Adrenal gland (tissue), 19 donors: ENCODE measurements at regions of chr2 and their contacts with region 1.

Region 1: DNA sequence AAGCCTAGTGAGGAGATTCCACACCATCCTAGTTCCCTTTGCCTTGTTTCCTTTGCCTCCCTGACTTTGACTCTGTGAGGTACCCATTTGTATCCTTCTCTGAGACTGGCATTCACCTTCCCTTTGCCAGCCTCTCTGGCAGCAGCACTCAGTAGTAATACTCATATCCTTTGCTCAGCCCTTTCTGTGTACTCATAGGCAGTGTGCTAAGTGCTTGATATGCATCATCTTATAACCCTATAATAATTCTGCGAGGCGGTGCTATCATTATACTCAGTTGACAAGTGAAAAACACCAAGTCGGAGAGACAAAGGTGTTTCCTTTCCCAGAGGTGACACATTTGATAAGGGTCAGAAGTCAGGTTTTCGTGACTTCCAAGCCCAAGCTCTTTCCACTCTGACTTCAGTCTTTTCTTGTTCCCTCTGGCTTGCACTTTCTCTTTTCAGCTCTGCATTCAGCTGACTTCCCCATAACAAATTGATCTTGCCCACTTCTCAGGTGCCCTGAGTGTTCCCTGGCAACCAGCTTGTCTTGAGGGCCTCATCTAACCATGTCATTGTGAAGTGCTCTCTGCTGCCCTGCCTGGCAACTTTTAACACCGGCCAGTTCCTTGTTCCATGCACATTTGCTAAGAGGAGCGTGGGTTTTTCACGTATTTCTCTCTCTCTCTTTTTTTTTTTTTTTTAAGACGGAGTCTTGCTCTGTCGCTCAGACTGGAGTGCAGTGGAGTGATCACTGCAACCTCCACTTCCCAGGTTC is 94.5 kb upstream of the UPP2 start:
- DNase-seq: peak in 1 of 7 donors; percentile 70
- H3K4me3 ChIP-seq: no peak overlapping the region
- H3K27ac ChIP-seq: no peak overlapping the region
- H3K4me1 ChIP-seq: peaks cover 5 to 13% of the 10 kb centered on the region in 2 donors
- H3K27me3 ChIP-seq: no peaks in the 10 kb centered on the region
- CTCF ChIP-seq: peak in 1 of 6 experiments; percentile 20
- POLR2A ChIP-seq: no peak

Region 2: DNA sequence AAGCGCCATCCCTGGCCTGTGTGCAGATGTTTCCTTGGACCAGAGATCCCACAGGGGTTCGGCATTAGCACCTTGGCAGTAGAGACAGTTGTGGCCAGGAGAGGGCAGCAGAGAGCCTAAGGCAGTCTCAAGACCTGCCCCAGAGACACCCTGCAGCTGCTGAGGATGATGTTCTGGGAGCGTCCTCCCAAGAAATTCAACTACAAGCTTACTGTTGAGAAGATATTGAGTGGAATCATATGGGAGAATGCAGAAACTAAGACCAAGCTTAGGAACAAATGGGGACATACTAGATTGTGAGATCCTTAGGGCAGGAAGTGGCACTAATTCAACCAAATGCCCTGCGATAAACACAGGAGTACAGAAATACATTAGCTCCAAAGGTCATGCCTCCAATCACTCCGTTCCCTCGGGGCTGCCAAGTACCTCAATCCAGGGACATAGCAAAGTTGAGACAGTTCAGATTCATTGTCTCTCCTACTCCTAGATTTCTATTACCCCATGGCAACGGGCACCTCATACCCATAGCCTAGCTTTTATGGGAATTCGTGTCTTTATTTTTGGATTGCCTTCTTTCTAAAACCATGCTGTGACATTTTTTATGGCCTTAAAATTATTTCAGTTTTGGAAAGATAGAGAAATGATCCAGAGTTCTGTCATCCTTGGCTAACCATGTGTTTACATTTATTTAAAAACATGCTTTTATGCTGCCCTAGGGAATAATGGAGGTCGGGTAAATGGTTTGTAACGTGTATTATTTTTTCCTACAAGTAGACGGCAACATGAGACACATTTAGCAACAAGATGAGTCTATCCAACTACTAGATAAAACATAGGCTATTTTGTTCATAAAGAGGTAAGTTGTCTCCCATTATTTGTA is 679.3 kb before region 1 on chr2:
- intact Hi-C with region 1: loop called in 1 of 2 experiments (anchors 10 kb)
- DNase-seq: peak; percentile 62 to 90 (median 81)
- H3K4me3 ChIP-seq: no peak overlapping the region
- H3K27ac ChIP-seq: no peak overlapping the region
- H3K4me1 ChIP-seq: no peaks in the 10 kb centered on the region
- H3K27me3 ChIP-seq: no peaks in the 10 kb centered on the region
- CTCF ChIP-seq: peak; percentile 54 to 90 (median 71)
- POLR2A ChIP-seq: no peak

Region 3: DNA sequence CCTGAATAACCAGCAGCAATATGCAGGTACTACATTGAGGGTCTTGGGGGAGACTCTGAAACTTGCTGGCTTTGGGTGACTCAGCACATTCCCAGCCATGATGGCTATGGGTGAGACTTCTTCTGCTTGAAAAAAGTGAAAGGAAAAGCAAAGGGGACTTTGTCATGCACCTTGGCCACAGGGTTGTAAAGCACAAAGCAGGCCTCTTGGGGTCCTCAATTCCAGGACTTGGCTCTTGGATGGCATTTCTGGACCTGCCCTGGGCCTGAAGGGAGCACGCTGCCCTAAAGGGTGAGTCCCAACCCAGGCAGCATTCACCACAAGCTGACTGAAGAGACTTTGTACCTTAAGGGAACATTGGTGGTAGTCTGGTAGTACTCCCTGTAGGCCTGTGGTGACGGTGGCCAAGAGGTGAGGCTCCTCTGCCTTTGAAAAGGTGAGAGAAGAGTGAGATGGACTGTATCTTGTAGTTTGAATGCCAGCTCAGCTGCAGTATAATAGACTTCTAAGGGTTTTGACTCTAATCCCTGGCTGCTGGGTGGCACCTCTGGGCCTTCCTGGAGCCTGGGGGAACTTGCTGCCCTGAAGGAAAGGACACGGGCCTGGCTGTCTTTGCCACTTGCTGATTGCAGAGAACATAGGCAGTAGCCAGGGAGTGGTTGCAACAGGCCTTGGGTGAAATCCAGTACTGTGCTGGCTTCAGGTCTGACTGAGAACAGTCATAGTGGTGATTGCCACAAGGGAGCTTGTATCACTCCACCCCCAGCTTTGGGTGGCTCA is 526.8 kb before region 1 on chr2:
- intact Hi-C with region 1: loop called in 1 of 2 experiments (anchors 10 kb)
- DNase-seq: peak in 5 of 7 donors; percentile 13 to 36 (median 25)
- H3K4me3 ChIP-seq: no peak overlapping the region
- H3K27ac ChIP-seq: no peak overlapping the region
- H3K4me1 ChIP-seq: no peaks in the 10 kb centered on the region
- H3K27me3 ChIP-seq: no peaks in the 10 kb centered on the region
- CTCF ChIP-seq: no peak
- POLR2A ChIP-seq: no peak

Region 4: DNA sequence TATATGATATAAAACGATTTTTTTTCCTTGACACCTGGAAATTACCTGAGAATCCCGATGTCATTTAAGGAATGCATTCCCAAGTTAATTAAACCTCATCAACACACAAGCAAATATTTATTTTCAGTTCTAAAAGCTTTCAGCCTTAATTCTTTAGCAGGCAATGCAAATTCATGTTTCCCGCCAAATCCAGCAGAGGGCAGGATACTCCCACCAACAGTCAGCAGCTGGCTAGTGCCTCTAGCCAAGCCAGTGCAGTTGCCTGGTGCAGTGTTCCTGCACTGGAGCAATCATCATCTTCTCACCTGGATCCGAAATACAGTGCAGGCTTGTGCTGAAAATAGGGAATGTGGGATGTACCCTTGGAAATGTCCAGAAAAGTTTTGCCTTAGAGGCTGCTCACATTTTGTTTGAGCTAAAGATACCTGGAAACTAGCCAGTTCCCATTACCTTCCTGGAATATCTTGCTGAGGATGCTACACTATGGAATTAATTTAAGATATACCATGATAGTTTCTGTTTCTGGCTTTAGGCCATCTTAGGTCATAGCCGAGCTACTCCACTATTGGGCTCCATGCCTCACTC is 514.9 kb before region 1 on chr2:
- intact Hi-C with region 1: loop called (anchors 5 to 10 kb)
- DNase-seq: peak; percentile 44 to 85 (median 63)
- H3K4me3 ChIP-seq: no peak overlapping the region
- H3K27ac ChIP-seq: no peak overlapping the region
- H3K4me1 ChIP-seq: no peaks in the 10 kb centered on the region
- H3K27me3 ChIP-seq: peaks cover 4% of the 10 kb centered on the region
- CTCF ChIP-seq: peak; percentile 42 to 66 (median 56)
- POLR2A ChIP-seq: no peak

Region 5: GRCh38 chr2:157777427-157777826 is 229.7 kb before region 1 on chr2:
- intact Hi-C with region 1: loop called (anchors 5 kb)
- DNase-seq: peak; percentile 41 to 87 (median 56)
- H3K4me3 ChIP-seq: no peak overlapping the region
- H3K27ac ChIP-seq: no peak overlapping the region
- H3K4me1 ChIP-seq: peaks cover 0 to 4% of the 10 kb centered on the region in 2 donors
- H3K27me3 ChIP-seq: no peaks in the 10 kb centered on the region
- CTCF ChIP-seq: peak; percentile 39 to 82 (median 72)
- POLR2A ChIP-seq: no peak

Region 6: GRCh38 chr2:157876066-157876787 is 130.9 kb before region 1 on chr2 and contains the start of gene ACVR1:
- intact Hi-C with region 1: loop called in 1 of 2 experiments (anchors 5 kb)
- DNase-seq: peak; percentile 93 to 98 (median 97)
- H3K4me3 ChIP-seq: peak within 1 kb of the TSS in 3 of 4 donors; percentile 61 to 90 (median 83)
- H3K27ac ChIP-seq: peak within 1 kb of the TSS; percentile 48 to 99 (median 96)
- H3K4me1 ChIP-seq: peaks cover 16 to 23% of the 10 kb centered on the region in 2 donors
- H3K27me3 ChIP-seq: no peaks in the 10 kb centered on the region
- CTCF ChIP-seq: peak in 4 of 6 experiments; percentile 18 to 65 (median 32)
- POLR2A ChIP-seq: peak; percentile 48 to 77
- total RNA-seq, gene ACVR1: 7.4 to 25.0 (median 17.4) TPM